Activated CD8-positive, alpha-beta T cell treated with anti-CD3 and anti-CD28 coated beads for 36 hours (primary cell): ENCODE measurements at regions of chr13 and their contacts with region 1.

Region 1: GRCh38 chr13:75326173-75327134 is 155.5 kb downstream of the TBC1D4 start:
- DNase-seq: peak; percentile 77
- ATAC-seq: peak; percentile 88
- H3K4me3 Mint-ChIP-seq: peak overlapping the region; percentile 98
- H3K27ac Mint-ChIP-seq: peak overlapping the region; percentile 99
- H3K4me1 Mint-ChIP-seq: peaks cover 33% of the 10 kb centered on the region
- H3K27me3 Mint-ChIP-seq: no peaks in the 10 kb centered on the region
- CTCF ChIP-seq: no peak

Region 2: GRCh38 chr13:75312884-75313520 is 13.5 kb before region 1 on chr13:
- CTCF ChIA-PET with region 1: interaction called, 7 read pairs
- POLR2A ChIA-PET with region 1: interaction called, 14 read pairs
- intact Hi-C with region 1: loop called (anchors 2 kb)
- DNase-seq: peak; percentile 86
- ATAC-seq: peak; percentile 83
- H3K4me3 Mint-ChIP-seq: no peak overlapping the region
- H3K27ac Mint-ChIP-seq: peak overlapping the region; percentile 85
- H3K4me1 Mint-ChIP-seq: peaks cover 63% of the 10 kb centered on the region
- H3K27me3 Mint-ChIP-seq: no peaks in the 10 kb centered on the region
- CTCF ChIP-seq: no peak

Region 3: GRCh38 chr13:75345193-75345592 is 18.7 kb after region 1 on chr13:
- CTCF ChIA-PET with region 1: interaction called, 4 read pairs
- POLR2A ChIA-PET with region 1: interaction called, 12 read pairs
- intact Hi-C with region 1: no loop called
- DNase-seq: no peak
- ATAC-seq: no peak
- H3K4me3 Mint-ChIP-seq: no peak overlapping the region
- H3K27ac Mint-ChIP-seq: no peak overlapping the region
- H3K4me1 Mint-ChIP-seq: peaks cover 8% of the 10 kb centered on the region
- H3K27me3 Mint-ChIP-seq: no peaks in the 10 kb centered on the region
- CTCF ChIP-seq: no peak

Region 4: GRCh38 chr13:75357576-75358289 is 31.3 kb after region 1 on chr13:
- CTCF ChIA-PET with region 1: interaction called, 12 read pairs
- POLR2A ChIA-PET with region 1: interaction called, 12 read pairs
- intact Hi-C with region 1: loop called (anchors 5 kb)
- DNase-seq: peak; percentile 69
- ATAC-seq: peak; percentile 95
- H3K4me3 Mint-ChIP-seq: no peak overlapping the region
- H3K27ac Mint-ChIP-seq: no peak overlapping the region
- H3K4me1 Mint-ChIP-seq: peaks cover 30% of the 10 kb centered on the region
- H3K27me3 Mint-ChIP-seq: no peaks in the 10 kb centered on the region
- CTCF ChIP-seq: peak; percentile 79

Region 5: DNA sequence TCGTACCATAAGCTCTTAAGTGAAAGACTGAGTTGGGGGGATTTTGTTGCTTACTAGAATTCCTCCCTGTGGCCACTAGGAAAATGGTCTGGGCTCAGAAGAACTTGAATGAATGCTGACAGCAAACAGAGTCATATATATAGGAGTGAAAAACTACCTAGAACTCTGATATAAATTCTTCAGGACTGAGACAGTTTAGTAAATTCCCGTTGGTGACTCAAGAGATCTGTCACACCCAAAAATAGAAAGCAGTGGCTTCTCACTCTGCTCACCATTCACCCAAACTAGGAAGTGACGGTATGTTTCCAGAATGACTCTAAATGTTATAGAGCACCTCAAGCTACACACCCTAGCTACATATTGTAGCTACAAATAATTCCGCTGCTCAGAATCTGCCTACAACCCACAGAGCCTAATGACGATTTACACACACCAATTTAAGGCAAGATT is 39.3 kb after region 1 on chr13:
- CTCF ChIA-PET with region 1: interaction called, 11 read pairs
- POLR2A ChIA-PET with region 1: interaction called, 8 read pairs
- intact Hi-C with region 1: loop called (anchors 2 kb)
- DNase-seq: peak; percentile 51
- ATAC-seq: peak; percentile 94
- H3K4me3 Mint-ChIP-seq: peak overlapping the region; percentile 58
- H3K27ac Mint-ChIP-seq: peak overlapping the region; percentile 94
- H3K4me1 Mint-ChIP-seq: peaks cover 49% of the 10 kb centered on the region
- H3K27me3 Mint-ChIP-seq: no peaks in the 10 kb centered on the region
- CTCF ChIP-seq: no peak